Ovary (tissue), 10 donors: ENCODE measurements at regions of chr3 and their contacts with region 1.

Region 1: GRCh38 chr3:124887177-124887931 is at the start of gene ITGB5:
- DNase-seq: peak; percentile 72 to 86 (median 80)
- H3K4me3 ChIP-seq: peak within 1 kb of the TSS; percentile 90
- H3K27ac ChIP-seq: peak within 1 kb of the TSS; percentile 80 to 83
- H3K4me1 ChIP-seq: peaks cover 4% of the 10 kb centered on the region
- H3K27me3 ChIP-seq: no peaks in the 10 kb centered on the region
- CTCF ChIP-seq: no peak
- EP300 ChIP-seq: no peak
- POLR2A ChIP-seq: peak; percentile 43
- total RNA-seq, gene ITGB5: 31.0 to 109 (median 38.0) TPM

Region 2: GRCh38 chr3:124761250-124761796 is 126.0 kb before region 1 on chr3:
- intact Hi-C with region 1: loop called in 1 of 4 experiments (anchors 5 kb)
- DNase-seq: peak; percentile 83 to 94 (median 90)
- H3K4me3 ChIP-seq: no peak overlapping the region
- H3K27ac ChIP-seq: peak overlapping the region in 1 of 2 donors; percentile 33
- H3K4me1 ChIP-seq: no peaks in the 10 kb centered on the region
- H3K27me3 ChIP-seq: no peaks in the 10 kb centered on the region
- CTCF ChIP-seq: peak; percentile 89 to 96 (median 94)
- EP300 ChIP-seq: no peak
- POLR2A ChIP-seq: no peak

Region 3: DNA sequence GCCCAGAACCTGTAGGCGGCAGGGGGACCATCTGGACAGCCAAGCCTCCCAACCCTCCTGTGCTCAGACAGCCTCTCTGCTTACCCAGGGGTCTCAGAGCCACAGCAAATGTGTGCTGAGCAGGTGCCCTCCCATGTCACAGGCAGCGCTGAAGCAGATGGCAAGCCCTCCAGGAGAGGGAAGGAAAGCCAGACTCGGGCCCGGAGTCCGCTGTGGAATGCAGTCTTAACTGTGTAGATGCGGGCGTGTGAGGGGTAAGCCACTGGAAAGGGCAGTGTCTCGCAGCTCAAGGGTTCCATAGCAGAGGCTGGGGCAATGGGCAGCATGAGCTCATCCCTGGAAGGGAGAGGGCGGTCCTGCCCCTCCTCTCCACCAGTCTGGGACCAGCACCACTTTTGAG is 111.5 kb before region 1 on chr3:
- intact Hi-C with region 1: loop called in 1 of 4 experiments (anchors 5 kb)
- DNase-seq: peak in 1 of 5 donors; percentile 10
- H3K4me3 ChIP-seq: no peak overlapping the region
- H3K27ac ChIP-seq: no peak overlapping the region
- H3K4me1 ChIP-seq: peaks cover 7% of the 10 kb centered on the region
- H3K27me3 ChIP-seq: no peaks in the 10 kb centered on the region
- CTCF ChIP-seq: no peak
- EP300 ChIP-seq: no peak
- POLR2A ChIP-seq: no peak

Region 4: GRCh38 chr3:124786441-124787241 is 100.7 kb before region 1 on chr3:
- intact Hi-C with region 1: loop called in 1 of 4 experiments (anchors 5 kb)
- DNase-seq: no peak
- H3K4me3 ChIP-seq: no peak overlapping the region
- H3K27ac ChIP-seq: no peak overlapping the region
- H3K4me1 ChIP-seq: peaks cover 6% of the 10 kb centered on the region
- H3K27me3 ChIP-seq: no peaks in the 10 kb centered on the region
- CTCF ChIP-seq: peak in 2 of 3 donors; percentile 31 to 34
- EP300 ChIP-seq: no peak
- POLR2A ChIP-seq: no peak

Region 5: DNA sequence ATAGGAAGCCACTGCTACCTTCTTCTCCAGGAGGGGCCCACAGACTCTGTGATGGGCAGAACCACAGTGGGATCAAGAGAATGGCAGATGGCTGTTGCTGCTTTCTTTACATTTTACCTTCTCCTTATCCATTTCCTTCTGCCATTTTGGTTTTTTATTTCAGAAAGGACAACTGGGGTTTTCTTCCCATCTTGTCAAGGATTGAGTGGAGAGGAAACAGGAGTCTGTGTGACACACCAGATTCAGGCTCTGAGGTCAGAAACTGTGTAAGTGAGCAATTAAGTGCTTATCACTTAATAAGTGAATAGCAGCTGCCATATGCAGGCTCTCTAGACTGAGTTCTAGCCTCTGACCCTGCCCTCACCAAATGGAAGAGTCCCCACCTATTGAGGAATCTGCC is 47.5 kb before region 1 on chr3:
- intact Hi-C with region 1: loop called in 1 of 4 experiments (anchors 5 kb)
- DNase-seq: no peak
- H3K4me3 ChIP-seq: no peak overlapping the region
- H3K27ac ChIP-seq: no peak overlapping the region
- H3K4me1 ChIP-seq: peaks cover 15% of the 10 kb centered on the region
- H3K27me3 ChIP-seq: no peaks in the 10 kb centered on the region
- CTCF ChIP-seq: no peak
- EP300 ChIP-seq: no peak
- POLR2A ChIP-seq: no peak

Region 6: GRCh38 chr3:125150525-125151441 is 263.4 kb after region 1 on chr3:
- intact Hi-C with region 1: no loop called
- DNase-seq: no peak
- H3K4me3 ChIP-seq: no peak overlapping the region
- H3K27ac ChIP-seq: no peak overlapping the region
- H3K4me1 ChIP-seq: no peaks in the 10 kb centered on the region
- H3K27me3 ChIP-seq: no peaks in the 10 kb centered on the region
- CTCF ChIP-seq: no peak
- EP300 ChIP-seq: no peak
- POLR2A ChIP-seq: no peak

Region 7: DNA sequence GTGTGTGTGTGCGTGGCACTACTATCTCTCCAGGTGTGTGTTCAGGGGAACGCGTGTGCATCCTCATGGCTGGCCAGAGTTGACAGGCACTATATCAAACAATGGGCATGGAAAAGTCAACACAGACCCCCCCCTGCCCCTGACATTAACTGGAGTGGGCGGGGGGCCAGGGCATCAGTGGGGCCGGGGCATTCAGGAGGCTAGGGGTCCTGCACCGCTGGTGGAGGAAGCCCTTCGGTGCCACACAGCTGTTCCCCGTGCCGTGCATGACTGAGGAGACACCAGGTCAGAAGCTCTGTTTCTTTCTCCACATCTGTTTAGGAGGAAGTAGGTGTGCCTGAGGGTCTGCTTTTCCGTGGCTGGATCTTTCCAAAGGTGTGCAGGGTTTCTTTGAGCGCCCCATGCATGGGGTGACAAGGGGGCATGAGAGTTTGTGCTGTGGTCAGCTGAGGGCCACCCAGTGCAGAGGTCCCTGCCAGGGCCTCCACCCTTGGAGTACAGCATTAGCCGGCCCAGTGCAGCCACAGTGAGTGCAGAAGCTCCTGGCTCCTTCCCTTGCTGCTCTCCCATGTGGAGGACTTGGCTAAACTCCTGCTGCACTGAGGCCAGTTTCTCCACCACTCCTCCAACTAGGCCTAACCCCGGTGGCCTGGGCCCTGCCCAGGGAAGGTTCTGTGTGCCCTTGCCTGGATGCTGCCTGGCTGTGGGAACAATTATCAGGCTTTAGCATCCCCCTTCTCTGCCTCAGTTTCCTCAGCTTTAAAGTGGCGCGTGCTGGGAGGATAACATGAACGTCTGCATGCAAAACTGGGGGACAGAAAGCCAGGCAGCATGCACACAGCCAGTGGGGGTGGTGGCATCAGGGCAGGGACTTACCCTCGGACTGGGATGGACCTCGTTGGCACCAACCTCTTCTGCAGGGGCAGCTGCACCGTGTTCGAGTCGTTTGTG is 1664.0 kb after region 1 on chr3:
- intact Hi-C with region 1: no loop called
- DNase-seq: peak in 1 of 5 donors; percentile 38
- H3K4me3 ChIP-seq: no peak overlapping the region
- H3K27ac ChIP-seq: no peak overlapping the region
- H3K4me1 ChIP-seq: no peaks in the 10 kb centered on the region
- H3K27me3 ChIP-seq: no peaks in the 10 kb centered on the region
- CTCF ChIP-seq: no peak
- EP300 ChIP-seq: no peak
- POLR2A ChIP-seq: no peak